ENCODE measurements at regions of chr4 and their contacts with region 1.

Region 1: DNA sequence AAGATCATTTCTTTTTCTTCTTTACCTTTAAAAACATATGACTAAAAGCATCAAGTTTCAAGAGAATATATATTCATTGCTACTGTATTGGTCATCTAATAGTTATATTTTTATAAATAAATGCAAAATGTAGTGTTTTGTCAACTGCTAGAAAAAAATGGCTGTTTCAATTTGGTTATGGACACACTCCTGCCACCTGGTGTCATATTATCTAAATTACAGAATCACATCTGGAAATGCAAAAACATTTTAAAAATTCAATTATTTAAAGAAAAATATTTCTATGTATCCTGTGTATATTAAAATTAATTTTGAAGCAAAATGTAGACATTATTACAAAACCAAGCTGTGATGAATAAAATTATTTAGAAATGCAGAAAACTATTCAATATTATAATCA is 329.4 kb upstream of the PCDH18 start:
- DNase-seq: no peak
- H3K4me3 Mint-ChIP-seq: no peak overlapping the region
- H3K27ac Mint-ChIP-seq: no peak overlapping the region
- H3K4me1 Mint-ChIP-seq: no peaks in the 10 kb centered on the region
- H3K27me3 Mint-ChIP-seq: no peaks in the 10 kb centered on the region

Region 2: DNA sequence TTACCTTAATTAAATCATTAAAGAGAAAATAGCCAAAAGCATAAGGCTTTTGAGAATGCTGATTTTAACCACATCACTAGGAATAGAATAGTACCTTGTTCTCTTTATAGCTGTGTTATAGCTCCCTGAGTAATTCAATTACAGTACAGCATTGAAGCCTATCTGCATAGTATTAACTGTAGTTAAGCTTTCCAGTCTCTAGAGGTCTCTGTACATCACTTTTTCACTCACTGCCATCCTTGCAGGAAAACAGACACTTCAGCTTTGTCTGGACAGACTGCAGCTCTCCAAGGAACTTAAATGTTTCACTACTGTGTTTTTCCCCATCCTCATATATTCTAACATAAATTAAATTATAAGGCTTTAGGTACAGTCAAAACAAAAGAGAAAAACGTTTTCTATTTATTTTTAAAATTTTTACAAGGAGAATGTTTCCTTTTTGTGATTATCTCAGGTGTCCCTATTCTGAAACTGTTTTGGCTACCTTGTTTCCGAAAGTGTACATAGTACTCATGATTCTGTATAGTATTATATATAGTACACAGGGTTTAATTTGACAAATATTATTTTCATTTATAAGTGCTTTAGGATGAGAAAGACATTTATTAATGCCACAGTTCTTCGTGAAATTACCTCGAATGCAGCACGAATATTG is 737.3 kb before region 1 on chr4:
- intact Hi-C with region 1: loop called (anchors 10 kb)
- DNase-seq: no peak
- H3K4me3 Mint-ChIP-seq: no peak overlapping the region
- H3K27ac Mint-ChIP-seq: no peak overlapping the region
- H3K4me1 Mint-ChIP-seq: no peaks in the 10 kb centered on the region
- H3K27me3 Mint-ChIP-seq: no peaks in the 10 kb centered on the region

Region 3: GRCh38 chr4:137310593-137311490 is 550.8 kb before region 1 on chr4:
- intact Hi-C with region 1: no loop called
- DNase-seq: no peak
- H3K4me3 Mint-ChIP-seq: no peak overlapping the region
- H3K27ac Mint-ChIP-seq: no peak overlapping the region
- H3K4me1 Mint-ChIP-seq: no peaks in the 10 kb centered on the region
- H3K27me3 Mint-ChIP-seq: no peaks in the 10 kb centered on the region